MCF 10A (cell line): ENCODE measurements at regions of chr1 and their contacts with region 1.

Region 1: DNA sequence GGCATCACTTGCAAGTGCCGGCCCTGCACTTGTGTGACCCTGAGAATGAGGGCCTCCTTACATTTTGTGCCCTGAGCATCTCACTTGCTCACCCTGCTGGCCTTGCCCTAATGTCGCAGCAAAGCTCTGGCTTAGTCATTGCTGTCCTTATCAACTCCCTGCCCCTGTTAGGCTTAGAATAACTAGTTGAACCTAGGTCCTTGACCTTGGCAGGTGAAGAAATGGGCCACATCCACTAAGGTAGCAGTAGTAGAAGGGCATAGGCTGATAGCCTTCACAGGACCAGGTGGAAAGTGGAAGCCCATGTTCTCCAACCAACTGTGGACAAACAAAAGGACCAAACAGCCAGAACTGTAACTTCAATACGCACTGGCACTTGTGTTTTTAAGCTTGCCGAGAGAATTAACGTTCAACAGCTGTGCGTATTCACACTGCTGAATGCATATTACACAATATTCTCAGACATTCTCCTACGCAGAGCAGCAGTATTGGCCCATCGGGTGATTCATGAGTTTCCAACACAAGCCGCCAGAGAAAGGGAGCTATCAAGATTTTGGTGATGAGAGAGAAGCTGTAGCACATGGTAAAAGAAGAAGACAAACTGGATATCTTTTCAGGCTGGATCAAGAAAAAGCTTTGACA is 27.7 kb upstream of the PTGFRN start:
- DNase-seq: peak; percentile 86
- H3K4me3 Mint-ChIP-seq: no peak overlapping the region
- H3K27ac Mint-ChIP-seq: peak overlapping the region; percentile 55
- H3K4me1 Mint-ChIP-seq: peaks cover 8% of the 10 kb centered on the region
- H3K27me3 Mint-ChIP-seq: no peaks in the 10 kb centered on the region
- CTCF ChIP-seq: peak; percentile 12

Region 2: DNA sequence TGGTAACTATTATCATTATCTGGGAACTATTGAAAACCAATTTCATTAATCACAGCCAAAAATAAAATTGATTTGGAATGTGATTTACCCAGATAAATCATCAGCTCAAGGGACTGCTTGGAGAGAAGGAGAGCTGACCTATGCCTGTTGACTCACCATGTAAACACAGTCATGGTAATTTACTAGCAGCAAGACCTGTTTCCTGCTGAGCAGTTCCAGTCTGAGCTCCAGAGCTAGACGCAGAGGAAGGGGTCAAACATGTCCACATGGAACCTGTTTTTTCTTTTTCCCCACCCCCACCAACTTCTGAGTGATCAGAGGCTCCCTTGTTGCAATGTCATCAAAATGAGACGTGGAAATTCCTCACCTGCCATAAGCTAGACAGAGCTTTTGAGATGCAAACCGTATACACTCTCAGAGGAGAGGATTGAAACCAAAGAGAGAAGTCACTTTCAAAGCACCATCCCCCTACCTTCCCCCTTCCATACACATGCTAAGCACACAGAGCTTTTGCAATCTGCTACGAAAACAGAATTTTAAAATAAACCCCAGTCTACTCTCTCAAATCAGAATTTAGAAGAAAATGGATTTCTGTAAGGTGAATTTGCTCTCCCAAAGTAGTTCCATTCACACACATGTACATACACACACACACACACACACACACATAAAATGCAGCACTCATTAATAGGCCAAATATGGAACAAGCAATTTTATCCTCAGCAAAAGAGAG is 28.2 kb before region 1 on chr1:
- CTCF ChIA-PET with region 1: interaction called, 12 read pairs
- POLR2A ChIA-PET with region 1: interaction called, 9 read pairs
- intact Hi-C with region 1: no loop called
- DNase-seq: peak; percentile 68
- H3K4me3 Mint-ChIP-seq: no peak overlapping the region
- H3K27ac Mint-ChIP-seq: peak overlapping the region; percentile 50
- H3K4me1 Mint-ChIP-seq: peaks cover 15% of the 10 kb centered on the region
- H3K27me3 Mint-ChIP-seq: no peaks in the 10 kb centered on the region
- CTCF ChIP-seq: no peak

Region 3: GRCh38 chr1:116909510-116910378 is 27.7 kb after region 1 on chr1 and contains the start of gene PTGFRN:
- CTCF ChIA-PET with region 1: interaction called, 8 read pairs
- POLR2A ChIA-PET with region 1: interaction called, 38 read pairs
- intact Hi-C with region 1: no loop called
- DNase-seq: peak; percentile 74
- H3K4me3 Mint-ChIP-seq: no peak within 1 kb of the TSS
- H3K27ac Mint-ChIP-seq: peak within 1 kb of the TSS; percentile 85
- H3K4me1 Mint-ChIP-seq: peaks cover 10% of the 10 kb centered on the region
- H3K27me3 Mint-ChIP-seq: no peaks in the 10 kb centered on the region
- CTCF ChIP-seq: no peak
- total RNA-seq, gene PTGFRN: 45.2 and 61.0 TPM in 2 replicates

Region 4: GRCh38 chr1:116919802-116920201 is 37.8 kb after region 1 on chr1:
- CTCF ChIA-PET with region 1: interaction called, 4 read pairs
- POLR2A ChIA-PET with region 1: interaction called, 15 read pairs
- intact Hi-C with region 1: no loop called
- DNase-seq: peak; percentile 52
- H3K4me3 Mint-ChIP-seq: peak overlapping the region; percentile 36
- H3K27ac Mint-ChIP-seq: peak overlapping the region; percentile 86
- H3K4me1 Mint-ChIP-seq: peaks cover 37% of the 10 kb centered on the region
- H3K27me3 Mint-ChIP-seq: no peaks in the 10 kb centered on the region
- CTCF ChIP-seq: no peak